ENCODE measurements at regions of chr6 and their contacts with region 1.

Region 1: GRCh38 chr6:37239950-37240713 is 17.4 kb upstream of the TBC1D22B start:
- DNase-seq: peak; percentile 27
- H3K4me3 Mint-ChIP-seq: no peak overlapping the region
- H3K27ac Mint-ChIP-seq: peak overlapping the region; percentile 86
- H3K4me1 Mint-ChIP-seq: peaks cover 41% of the 10 kb centered on the region
- H3K27me3 Mint-ChIP-seq: no peaks in the 10 kb centered on the region

Region 2: DNA sequence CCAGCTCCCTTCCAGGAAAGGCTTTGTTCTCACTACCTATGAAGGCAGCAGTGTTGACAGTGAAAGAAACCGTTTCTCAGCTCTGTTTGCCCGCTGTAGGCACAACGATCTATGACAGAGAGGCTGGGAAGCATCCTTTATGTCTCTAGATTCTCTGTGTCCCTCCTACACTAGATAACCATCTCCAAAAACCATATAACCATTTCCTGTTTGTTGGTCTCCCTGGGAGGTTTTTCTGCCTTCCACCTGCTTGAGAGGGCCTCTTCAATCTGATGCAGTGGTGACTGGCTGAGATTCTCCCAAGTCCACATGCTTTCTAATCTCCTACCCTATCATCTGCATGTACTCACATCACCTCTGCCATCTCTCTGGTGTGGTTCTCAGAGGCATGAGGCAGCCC is 49.8 kb after region 1 on chr6:
- intact Hi-C with region 1: loop called (anchors 5 kb)
- DNase-seq: peak; percentile 64
- H3K4me3 Mint-ChIP-seq: peak overlapping the region; percentile 35
- H3K27ac Mint-ChIP-seq: peak overlapping the region; percentile 78
- H3K4me1 Mint-ChIP-seq: peaks cover 51% of the 10 kb centered on the region
- H3K27me3 Mint-ChIP-seq: no peaks in the 10 kb centered on the region

Region 3: DNA sequence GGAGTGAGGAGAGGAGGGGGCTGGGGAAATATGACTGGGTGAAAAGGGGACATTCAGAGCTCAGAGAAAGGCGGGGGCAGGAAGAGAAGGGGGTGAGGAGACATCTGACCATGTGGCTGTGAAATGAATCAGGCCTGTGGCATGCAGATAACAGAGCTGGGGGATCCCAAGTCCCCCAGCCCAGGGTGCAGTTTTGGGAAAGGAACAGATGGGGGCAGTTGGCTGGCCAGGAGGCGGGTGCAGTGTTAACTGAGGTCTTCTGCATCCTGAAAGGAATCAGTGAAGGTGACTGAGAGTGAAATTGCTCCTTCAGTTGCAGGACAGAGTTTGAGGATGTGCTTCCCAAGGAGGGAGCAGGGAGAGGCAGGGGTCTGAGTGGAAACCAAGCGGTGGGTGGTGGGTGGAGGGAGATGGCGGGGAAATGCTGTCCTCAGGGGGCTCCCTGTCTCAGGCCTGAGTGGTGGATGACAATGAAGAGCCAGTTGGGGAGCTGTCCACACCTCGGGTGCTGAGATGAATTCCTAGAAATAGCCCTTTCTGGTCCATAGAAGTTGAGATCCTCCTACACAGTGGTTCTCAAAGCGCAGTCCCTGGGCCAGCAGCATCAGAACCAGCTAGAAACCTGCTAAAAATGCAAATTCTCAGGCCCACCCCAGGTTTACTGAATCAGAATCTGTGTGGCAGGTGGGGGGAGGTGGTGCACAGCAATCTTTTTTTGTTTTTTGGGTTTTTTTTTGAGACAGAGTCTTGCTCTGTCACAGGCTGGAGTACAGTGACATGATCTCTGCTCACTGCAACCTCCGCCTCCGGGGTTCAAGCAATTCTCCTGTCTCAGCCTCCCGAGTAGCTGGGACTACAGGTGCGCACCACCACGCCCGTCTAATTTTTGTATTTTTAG is 285.6 kb after region 1 on chr6:
- intact Hi-C with region 1: no loop called
- DNase-seq: no peak
- H3K4me3 Mint-ChIP-seq: no peak overlapping the region
- H3K27ac Mint-ChIP-seq: no peak overlapping the region
- H3K4me1 Mint-ChIP-seq: peaks cover 2% of the 10 kb centered on the region
- H3K27me3 Mint-ChIP-seq: peaks cover 15% of the 10 kb centered on the region

Region 4: GRCh38 chr6:37979392-37980221 is 739.5 kb after region 1 on chr6:
- intact Hi-C with region 1: loop called (anchors 5 kb)
- DNase-seq: no peak
- H3K4me3 Mint-ChIP-seq: no peak overlapping the region
- H3K27ac Mint-ChIP-seq: no peak overlapping the region
- H3K4me1 Mint-ChIP-seq: peaks cover 36% of the 10 kb centered on the region
- H3K27me3 Mint-ChIP-seq: no peaks in the 10 kb centered on the region

Measured in activated T-helper 2 cell treated with anti-CD3 and anti-CD28 coated beads, Interferon-gamma antibody, Interleukin-2, Interleukin-4, amounts not matched to agents 10 μg/mL and 5 μg/mL and 100 μg/mL, durations not matched to agents 14 hours and 24 hours and 36 hours (primary cell).